HCT116 (cell line): ENCODE measurements at regions of chr20 and their contacts with region 1.

Region 1: DNA sequence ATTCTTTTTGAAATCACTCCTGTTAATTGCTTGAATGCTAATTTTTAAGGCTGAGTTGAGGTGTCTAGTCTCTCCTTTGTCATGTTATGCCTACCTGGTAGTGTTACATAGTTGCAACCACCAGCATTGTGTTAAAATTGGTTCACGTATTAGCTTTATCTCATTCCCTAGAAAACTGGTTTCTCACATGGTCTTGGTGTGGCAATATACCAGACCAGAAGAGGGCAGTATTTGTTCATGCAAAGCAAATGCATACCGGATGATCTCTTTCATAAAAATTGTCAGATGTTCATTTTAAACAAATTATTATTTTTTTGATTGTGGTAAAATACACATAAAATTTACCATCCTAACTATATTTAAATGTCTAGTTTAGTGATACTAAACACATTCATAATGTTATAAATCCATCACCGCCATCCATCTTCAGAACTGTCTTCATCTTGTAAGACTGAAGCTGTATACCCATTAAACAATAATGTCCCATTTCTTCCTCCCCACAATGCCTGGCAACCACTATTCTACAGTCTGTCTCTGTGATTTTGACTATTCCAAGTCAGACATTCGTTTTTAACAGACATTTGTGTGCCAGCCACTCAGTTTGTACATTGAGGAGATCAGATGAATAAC is 92.8 kb downstream of the ATRN start:
- DNase-seq: peak; percentile 41
- ATAC-seq: peak; percentile 77
- H3K4me3 ChIP-seq: no peak overlapping the region
- H3K27ac ChIP-seq: no peak overlapping the region
- H3K4me1 ChIP-seq: no peaks in the 10 kb centered on the region
- H3K27me3 ChIP-seq: no peaks in the 10 kb centered on the region
- CTCF ChIP-seq: peak; percentile 57 to 83 (median 77)
- POLR2A ChIP-seq: no peak
- RAD21 ChIP-seq: peak; percentile 76

Region 2: GRCh38 chr20:3551681-3552434 is 11.8 kb before region 1 on chr20:
- CTCF ChIA-PET with region 1: interaction called, 27 read pairs
- POLR2A ChIA-PET with region 1: no interaction called
- RAD21 ChIA-PET with region 1: no interaction called
- intact Hi-C with region 1: no loop called
- DNase-seq: no peak
- ATAC-seq: no peak
- H3K4me3 ChIP-seq: no peak overlapping the region
- H3K27ac ChIP-seq: no peak overlapping the region
- H3K4me1 ChIP-seq: no peaks in the 10 kb centered on the region
- H3K27me3 ChIP-seq: no peaks in the 10 kb centered on the region
- CTCF ChIP-seq: no peak
- POLR2A ChIP-seq: no peak
- RAD21 ChIP-seq: no peak

Region 3: GRCh38 chr20:3577366-3577765 is 13.7 kb after region 1 on chr20:
- CTCF ChIA-PET with region 1: interaction called, 15 read pairs
- POLR2A ChIA-PET with region 1: no interaction called
- RAD21 ChIA-PET with region 1: no interaction called
- intact Hi-C with region 1: no loop called
- DNase-seq: no peak
- ATAC-seq: no peak
- H3K4me3 ChIP-seq: no peak overlapping the region
- H3K27ac ChIP-seq: no peak overlapping the region
- H3K4me1 ChIP-seq: no peaks in the 10 kb centered on the region
- H3K27me3 ChIP-seq: no peaks in the 10 kb centered on the region
- CTCF ChIP-seq: no peak
- POLR2A ChIP-seq: no peak
- RAD21 ChIP-seq: no peak

Region 4: DNA sequence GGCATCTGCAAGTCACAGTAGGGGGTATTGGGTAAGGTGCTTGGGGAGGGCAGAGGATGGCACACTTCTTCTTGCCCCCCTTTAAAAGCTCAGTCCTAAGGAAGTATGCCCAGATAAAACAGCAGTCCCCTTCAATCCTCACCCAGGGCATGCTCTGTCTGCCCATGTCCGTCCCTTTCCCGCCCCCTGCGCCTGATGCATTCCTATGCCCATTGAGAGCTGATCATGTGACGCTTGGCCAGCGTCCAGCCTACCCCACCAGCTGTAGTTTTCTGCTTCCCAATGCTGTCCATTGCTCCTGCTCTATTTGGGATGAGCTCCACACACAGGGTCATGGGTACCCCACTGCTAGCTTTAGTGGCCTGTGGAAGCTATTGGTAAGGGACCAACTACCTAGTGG is 140.4 kb after region 1 on chr20:
- CTCF ChIA-PET with region 1: no interaction called
- POLR2A ChIA-PET with region 1: no interaction called
- RAD21 ChIA-PET with region 1: no interaction called
- intact Hi-C with region 1: no loop called
- DNase-seq: no peak
- ATAC-seq: no peak
- H3K4me3 ChIP-seq: no peak overlapping the region
- H3K27ac ChIP-seq: no peak overlapping the region
- H3K4me1 ChIP-seq: peaks cover 0 to 8% of the 10 kb centered on the region in 2 experiments; a peak in 2 of 4 replicates
- H3K27me3 ChIP-seq: no peaks in the 10 kb centered on the region
- CTCF ChIP-seq: no peak
- POLR2A ChIP-seq: no peak
- RAD21 ChIP-seq: no peak

Region 5: DNA sequence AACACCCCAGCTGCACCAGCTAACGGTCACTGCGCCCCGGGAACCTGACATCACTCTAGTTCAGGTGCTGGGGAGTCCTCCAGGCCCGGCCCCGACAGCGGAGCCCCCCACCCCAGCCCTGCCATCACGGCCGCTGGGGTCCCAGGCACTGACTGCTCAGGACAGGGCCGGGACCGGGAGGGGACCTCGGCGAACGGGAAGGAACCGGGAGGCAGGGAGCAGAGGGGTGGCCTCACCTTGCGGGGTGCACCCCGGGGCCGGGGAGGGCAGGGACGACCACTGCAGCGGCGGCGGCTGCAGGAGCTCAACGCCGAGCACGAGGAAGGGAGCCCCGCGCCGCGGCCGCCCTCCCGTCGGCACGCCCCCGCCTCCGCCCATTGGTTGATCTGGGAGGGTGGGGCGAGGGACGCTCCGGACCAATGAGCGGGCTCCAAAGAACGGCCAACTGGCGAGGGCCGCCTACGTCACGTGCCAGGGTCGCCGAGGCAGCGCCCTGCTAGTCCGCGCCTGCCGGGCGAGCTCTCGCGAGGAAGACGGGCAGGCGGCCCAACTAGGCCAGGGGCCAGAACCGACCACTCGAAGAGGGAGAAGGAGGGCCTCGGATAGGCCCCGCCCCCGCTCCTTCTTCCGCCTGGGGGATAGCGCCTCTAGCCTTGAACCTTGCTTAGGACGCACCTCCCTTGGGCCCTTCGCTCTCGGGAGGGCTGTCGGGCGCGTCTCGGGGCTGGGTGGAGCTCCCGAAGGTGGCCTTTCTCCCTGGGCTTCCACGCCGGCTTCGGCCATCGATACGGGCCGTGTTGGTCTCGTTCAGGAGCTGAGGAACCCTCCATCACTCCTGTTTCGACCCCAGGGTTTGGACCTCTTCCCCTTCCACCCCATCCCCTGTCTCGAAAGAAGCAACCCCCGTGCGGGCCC is 204.0 kb after region 1 on chr20 and contains the start of gene ADISSP:
- CTCF ChIA-PET with region 1: interaction called, 10 read pairs
- POLR2A ChIA-PET with region 1: no interaction called
- RAD21 ChIA-PET with region 1: no interaction called
- intact Hi-C with region 1: loop called (anchors 5 kb)
- DNase-seq: peak; percentile 95
- ATAC-seq: peak; percentile 92
- H3K4me3 ChIP-seq: peak within 1 kb of the TSS; percentile 84 to 91
- H3K27ac ChIP-seq: peak within 1 kb of the TSS; percentile 83
- H3K4me1 ChIP-seq: peaks cover 12 to 36% of the 10 kb centered on the region in 2 experiments
- H3K27me3 ChIP-seq: no peaks in the 10 kb centered on the region
- CTCF ChIP-seq: peak in 2 of 3 experiments; percentile 8 to 26; a peak in 2 of 6 replicates
- POLR2A ChIP-seq: peak; percentile 31
- RAD21 ChIP-seq: no peak
- total RNA-seq, gene ADISSP: 99.4 TPM